HEK293 (cell line): ENCODE measurements at regions of chr7 and their contacts with region 1.

Region 1: GRCh38 chr7:123190109-123190831 is 9.5 kb downstream of the SLC13A1 start:
- H3K4me3 ChIP-seq: no peak overlapping the region
- H3K27ac ChIP-seq: no peak overlapping the region
- H3K4me1 ChIP-seq: no peaks in the 10 kb centered on the region
- CTCF ChIP-seq: no peak

Region 2: GRCh38 chr7:121351679-121352078 is 1838.6 kb before region 1 on chr7:
- CTCF ChIA-PET with region 1: interaction called, 10 read pairs
- POLR2A ChIA-PET with region 1: no interaction called
- H3K4me3 ChIP-seq: no peak overlapping the region
- H3K27ac ChIP-seq: no peak overlapping the region
- H3K4me1 ChIP-seq: no peaks in the 10 kb centered on the region
- CTCF ChIP-seq: no peak